ENCODE measurements at regions of chr1 and their contacts with region 1.

Region 1: DNA sequence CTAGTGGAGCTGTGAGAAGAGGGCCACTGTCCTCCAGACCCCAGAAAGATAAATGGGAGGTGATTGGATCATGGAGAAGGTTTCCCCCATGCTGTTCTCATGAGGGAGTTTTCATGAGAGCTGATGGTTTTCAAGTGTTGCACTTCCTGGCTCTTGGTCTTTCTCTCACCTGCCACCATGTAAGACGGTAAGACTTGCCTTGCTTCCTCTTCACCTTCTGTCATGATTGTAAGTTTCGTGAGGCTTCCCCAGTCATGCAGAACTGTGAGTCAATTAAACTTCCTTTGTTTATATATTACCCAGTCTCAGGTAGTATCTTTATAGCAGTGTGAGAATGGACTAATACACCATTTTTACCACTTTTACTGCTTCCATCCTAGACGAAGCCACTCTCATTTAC is 27.6 kb downstream of the GPR88 start:
- DNase-seq: no peak
- ATAC-seq: peak; percentile 25
- H3K4me3 Mint-ChIP-seq: no peak overlapping the region
- H3K27ac Mint-ChIP-seq: no peak overlapping the region
- H3K4me1 Mint-ChIP-seq: peaks cover 8% of the 10 kb centered on the region
- H3K27me3 Mint-ChIP-seq: no peaks in the 10 kb centered on the region
- CTCF ChIP-seq: no peak

Region 2: GRCh38 chr1:100895540-100896483 is 330.3 kb after region 1 on chr1 and contains the start of gene SLC30A7:
- CTCF ChIA-PET with region 1: no interaction called
- POLR2A ChIA-PET with region 1: interaction called, 11 read pairs
- intact Hi-C with region 1: no loop called
- DNase-seq: peak; percentile 97
- ATAC-seq: peak; percentile 86
- H3K4me3 Mint-ChIP-seq: peak within 1 kb of the TSS; percentile 98
- H3K27ac Mint-ChIP-seq: peak within 1 kb of the TSS; percentile 95
- H3K4me1 Mint-ChIP-seq: peaks cover 29% of the 10 kb centered on the region
- H3K27me3 Mint-ChIP-seq: no peaks in the 10 kb centered on the region
- CTCF ChIP-seq: no peak
- total RNA-seq, gene SLC30A7: 21.1 and 25.7 TPM in 2 replicates

Measured in activated B cell treated with CpG ODN at 0.5 μM for 24 hours (primary cell).